ENCODE measurements at regions of chr12 and their contacts with region 1.

Region 1: DNA sequence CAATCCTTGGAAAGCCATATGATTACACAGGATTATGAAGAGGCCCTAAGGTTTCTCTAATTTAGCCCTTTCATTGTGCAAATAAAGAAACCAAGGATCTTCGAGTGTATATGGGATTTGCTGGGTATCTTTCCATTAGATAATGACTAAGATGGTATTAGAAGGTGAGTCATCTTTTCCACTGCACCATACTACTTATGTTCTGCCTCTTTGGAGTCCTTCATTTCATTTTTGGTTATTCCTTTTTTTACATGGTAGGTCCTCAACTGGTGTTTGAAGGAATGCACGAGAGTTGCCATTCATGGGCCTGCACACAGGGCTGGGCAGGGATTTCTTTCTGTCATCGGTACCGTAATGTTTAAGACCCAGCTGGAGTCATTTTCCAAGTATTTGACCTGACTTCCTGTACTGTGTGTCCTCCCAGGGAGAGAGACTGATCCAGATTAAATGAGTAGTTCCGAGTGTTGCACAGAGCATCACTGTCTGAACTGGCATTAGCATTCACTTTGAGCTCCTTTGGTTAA is 85.7 kb downstream of the BORCS5 start:
- DNase-seq: no peak
- ATAC-seq: peak; percentile 57
- H3K4me3 ChIP-seq: no peak overlapping the region
- H3K27ac ChIP-seq: peak overlapping the region; percentile 80 to 96
- H3K4me1 ChIP-seq: no peaks in the 10 kb centered on the region
- H3K27me3 ChIP-seq: no peaks in the 10 kb centered on the region

Region 2: GRCh38 chr12:12398026-12398859 is 44.4 kb before region 1 on chr12:
- intact Hi-C with region 1: loop called (anchors 2 to 5 kb)
- DNase-seq: peak in 1 of 2 donors; percentile 71
- ATAC-seq: peak; percentile 94
- H3K4me3 ChIP-seq: no peak overlapping the region
- H3K27ac ChIP-seq: peak overlapping the region; percentile 13 to 22
- H3K4me1 ChIP-seq: peaks cover 5 to 9% of the 10 kb centered on the region in 2 donors
- H3K27me3 ChIP-seq: no peaks in the 10 kb centered on the region

Region 3: DNA sequence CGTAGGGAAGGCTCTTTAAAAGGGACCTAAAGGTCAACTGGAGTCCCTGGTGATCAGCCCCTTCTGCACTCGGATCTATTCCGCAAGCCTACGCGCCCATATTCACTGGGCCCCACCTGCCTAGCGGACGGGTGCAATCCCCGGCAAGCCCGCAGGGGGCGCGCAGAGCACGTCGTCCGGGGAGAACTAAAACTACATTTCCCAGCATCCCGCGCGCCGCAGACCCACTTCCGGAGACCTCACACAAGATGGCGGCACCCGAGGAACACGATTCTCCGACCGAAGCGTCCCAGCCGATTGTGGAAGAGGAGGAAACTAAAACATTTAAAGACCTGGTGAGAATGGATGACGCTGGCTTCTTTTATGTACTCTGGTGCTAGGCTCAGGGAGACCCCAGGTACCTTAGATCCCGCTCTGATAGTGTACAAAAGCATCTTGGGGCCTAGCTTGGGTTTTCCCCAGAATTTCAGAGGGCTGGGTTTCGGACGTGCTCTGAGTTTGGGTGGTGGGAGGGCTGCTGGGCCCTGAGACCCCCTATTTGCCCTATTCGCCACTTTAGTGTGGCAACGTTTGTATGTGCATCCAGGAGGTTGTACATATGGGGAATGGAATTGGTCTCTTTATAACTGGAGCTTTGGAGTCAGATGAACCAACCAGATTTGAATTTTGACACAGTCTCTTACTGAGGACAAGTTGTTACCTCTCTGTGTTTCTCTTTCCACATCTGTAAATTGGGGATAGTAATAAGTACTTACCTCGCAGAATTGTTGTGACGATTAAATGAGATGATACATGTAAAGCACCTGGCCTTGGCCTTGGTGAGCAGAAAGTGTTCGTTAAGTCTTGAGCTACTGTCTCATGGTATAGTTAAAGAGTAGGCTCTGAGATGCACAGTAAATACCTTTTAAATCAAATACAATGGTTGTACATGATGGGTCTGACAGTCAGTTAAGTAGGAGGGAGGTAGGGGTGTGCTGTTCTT is 370.8 kb after region 1 on chr12 and contains the start of gene DDX47:
- intact Hi-C with region 1: no loop called
- DNase-seq: peak; percentile 97 to 99
- ATAC-seq: peak; percentile 98
- H3K4me3 ChIP-seq: peak within 1 kb of the TSS; percentile 81 to 91
- H3K27ac ChIP-seq: peak within 1 kb of the TSS in 1 of 2 donors; percentile 11
- H3K4me1 ChIP-seq: peaks cover 0 to 10% of the 10 kb centered on the region in 2 donors
- H3K27me3 ChIP-seq: no peaks in the 10 kb centered on the region
- total RNA-seq, gene DDX47: 42.8 to 46.0 TPM

Measured in aorta (tissue), 5 donors.